ENCODE measurements at regions of chr3 and their contacts with region 1.

Region 1: DNA sequence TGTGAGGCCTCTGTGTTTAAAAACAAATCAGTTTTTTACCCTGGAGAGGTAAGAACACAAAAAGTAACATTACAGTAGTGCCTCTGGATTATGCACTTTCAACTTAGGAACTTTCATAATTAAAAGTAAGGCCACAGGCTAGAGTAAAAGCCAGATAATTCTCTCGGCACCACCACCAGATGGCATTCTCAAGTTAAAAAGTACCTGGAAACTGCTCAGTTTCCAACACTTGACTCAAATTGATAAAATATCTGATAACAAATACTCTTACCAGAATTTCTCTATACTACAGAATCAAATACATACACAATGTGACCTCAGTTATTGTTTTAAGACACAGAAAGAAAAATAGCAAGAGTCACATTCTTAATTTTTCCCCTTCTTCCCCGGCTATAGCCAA is 19.9 kb downstream of the SPICE1 start:
- DNase-seq: peak; percentile 30
- H3K27ac ChIP-seq: no peak overlapping the region
- CTCF ChIP-seq: peak; percentile 41

Region 2: GRCh38 chr3:112979240-112979832 is 515.7 kb before region 1 on chr3:
- CTCF ChIA-PET with region 1: no interaction called
- POLR2A ChIA-PET with region 1: no interaction called
- DNase-seq: peak; percentile 20
- H3K27ac ChIP-seq: no peak overlapping the region
- CTCF ChIP-seq: peak; percentile 70

Region 3: GRCh38 chr3:113241292-113242095 is 253.5 kb before region 1 on chr3:
- CTCF ChIA-PET with region 1: no interaction called
- POLR2A ChIA-PET with region 1: no interaction called
- DNase-seq: no peak
- H3K27ac ChIP-seq: no peak overlapping the region
- CTCF ChIP-seq: no peak

Region 4: DNA sequence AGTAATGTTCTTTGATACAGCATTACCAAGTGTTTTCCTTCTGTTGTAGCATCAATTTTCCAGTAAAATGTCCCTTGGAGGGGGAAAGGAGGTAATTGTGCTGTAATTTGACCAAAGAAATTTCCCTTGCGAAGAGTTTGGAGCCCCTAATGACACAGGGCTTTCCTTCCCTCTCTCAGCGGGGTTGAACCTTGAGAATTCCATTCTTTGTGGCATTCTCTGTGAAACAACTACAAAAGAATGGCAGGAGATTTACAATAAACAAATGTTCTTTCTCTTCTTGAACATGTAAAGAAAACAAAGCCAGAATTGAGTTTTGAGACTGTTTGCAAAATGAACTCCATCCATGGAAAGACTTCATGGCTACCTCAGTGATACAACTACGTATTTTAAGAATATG is 90.7 kb after region 1 on chr3:
- CTCF ChIA-PET with region 1: no interaction called
- POLR2A ChIA-PET with region 1: no interaction called
- DNase-seq: no peak
- H3K27ac ChIP-seq: no peak overlapping the region
- CTCF ChIP-seq: no peak

Region 5: DNA sequence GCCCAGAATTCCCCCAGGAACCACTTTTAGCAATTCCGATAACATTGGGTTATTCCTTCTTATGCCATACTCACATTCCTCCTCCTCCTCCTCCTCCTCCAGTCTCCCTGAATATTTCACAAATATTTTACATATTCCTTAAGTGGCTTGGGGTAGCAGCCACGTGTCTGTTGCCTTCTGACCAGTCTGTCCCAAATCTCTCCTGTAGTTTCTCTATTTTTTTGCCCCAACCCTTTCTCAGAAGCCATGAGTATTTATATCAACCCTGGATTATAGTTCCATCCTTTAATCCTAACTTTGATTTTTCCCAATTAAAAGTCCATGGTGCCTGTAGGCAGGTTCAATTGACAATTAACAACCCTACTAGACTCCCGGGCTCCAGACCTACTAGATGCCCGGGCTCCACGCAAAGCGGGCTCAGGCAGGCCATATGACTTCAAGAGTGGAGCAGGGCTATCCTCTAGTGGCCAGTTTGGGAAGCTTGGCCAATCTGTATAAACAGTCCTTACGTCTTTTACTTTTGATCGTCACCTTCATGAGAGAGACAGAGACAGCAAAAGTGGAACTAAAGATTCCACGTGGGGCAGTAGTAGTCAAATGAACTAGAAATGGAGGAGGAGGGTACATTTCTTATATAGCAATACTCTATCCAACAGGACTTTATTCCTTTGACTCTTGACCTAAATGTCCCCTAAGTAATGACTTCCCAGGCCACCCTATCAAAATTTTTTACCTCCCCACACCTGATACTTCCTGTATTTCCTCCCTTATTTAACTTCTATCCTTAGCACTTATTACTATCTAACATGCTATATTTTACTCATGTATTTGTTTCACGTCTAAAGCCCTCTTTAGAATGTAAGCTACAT is 131.7 kb after region 1 on chr3:
- CTCF ChIA-PET with region 1: interaction called, 10 read pairs
- POLR2A ChIA-PET with region 1: no interaction called
- DNase-seq: peak; percentile 68
- H3K27ac ChIP-seq: no peak overlapping the region
- CTCF ChIP-seq: peak; percentile 95

Measured in RWPE1 (cell line).